Activated T-helper 2 cell treated with anti-CD3 and anti-CD28 coated beads, Interferon-gamma antibody, Interleukin-2, Interleukin-4, amounts not matched to agents 10 μg/mL and 5 μg/mL and 100 μg/mL, durations not matched to agents 14 hours and 24 hours and 36 hours (primary cell): ENCODE measurements at regions of chr5 and their contacts with region 1.

Region 1: DNA sequence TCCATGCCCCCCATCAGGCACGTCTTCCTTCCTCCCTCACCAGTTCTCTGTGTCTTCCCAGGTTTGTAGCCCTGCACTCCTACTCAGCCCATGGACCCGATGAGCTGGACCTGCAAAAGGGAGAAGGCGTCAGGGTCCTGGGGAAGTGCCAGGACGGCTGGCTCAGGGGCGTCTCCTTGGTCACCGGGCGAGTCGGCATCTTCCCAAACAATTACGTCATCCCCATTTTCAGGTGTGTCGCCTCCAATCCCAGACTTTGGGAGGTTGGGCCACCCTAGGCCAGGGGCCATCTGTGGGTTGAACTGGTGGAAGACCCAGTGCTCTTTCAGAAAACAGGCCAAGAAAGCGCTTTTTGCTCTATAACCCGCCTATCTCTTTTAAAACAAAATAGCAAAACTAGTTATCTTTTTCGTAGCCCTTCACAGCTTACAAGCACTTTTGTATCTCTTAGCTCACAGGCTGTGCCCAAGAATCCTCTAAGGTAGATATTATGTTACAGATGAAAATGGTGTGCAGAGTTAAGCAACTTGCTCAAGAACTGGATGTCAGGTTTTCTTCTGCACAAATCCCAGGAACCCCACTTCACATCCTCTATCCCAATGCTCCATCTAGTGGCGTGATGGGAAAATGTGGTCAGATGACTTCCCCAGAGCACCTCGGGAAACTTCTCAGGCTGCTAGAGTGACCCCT is 56.2 kb downstream of the PLAC8L1 start:
- DNase-seq: no peak
- H3K4me3 Mint-ChIP-seq: no peak overlapping the region
- H3K27ac Mint-ChIP-seq: no peak overlapping the region
- H3K4me1 Mint-ChIP-seq: no peaks in the 10 kb centered on the region
- H3K27me3 Mint-ChIP-seq: peaks cover 10% of the 10 kb centered on the region

Region 2: DNA sequence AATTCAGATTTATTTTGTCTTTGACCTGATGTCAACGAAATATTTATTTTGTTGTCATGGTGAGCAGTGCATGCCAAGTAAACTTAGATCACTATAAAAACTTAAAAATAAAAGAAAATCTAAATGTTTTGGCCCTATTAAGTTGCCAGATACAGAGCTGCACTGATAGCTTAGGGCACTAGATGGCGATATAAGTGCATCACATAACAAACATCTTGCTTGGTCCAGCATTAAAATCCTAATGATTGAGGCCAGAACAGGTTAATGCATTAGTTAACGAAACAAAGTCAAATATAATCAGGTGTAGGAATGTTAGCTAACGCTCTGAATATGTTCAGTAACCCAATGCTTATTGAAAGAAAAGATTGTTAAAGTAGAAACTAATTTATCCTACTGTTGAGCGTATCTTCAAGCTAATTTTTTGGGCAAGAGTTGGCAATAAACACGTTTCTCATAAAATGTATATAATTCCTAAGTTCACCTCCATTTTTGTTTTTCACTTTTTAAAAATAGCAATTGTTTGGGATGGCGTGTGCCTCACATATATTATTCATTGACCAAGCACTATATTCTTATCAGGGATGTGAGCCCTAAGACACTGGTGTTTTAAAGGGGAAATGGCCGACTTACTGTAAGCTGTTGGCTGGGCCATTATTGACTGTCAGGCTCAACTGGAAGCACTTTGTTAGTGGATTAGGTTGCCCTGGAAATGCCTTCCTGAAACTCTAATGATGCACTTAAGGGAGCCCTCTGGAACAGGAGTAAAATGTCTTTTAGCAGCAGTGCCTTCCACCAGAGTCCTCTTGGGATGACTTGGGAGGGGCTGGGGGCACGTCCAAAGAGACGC is 1845.2 kb before region 1 on chr5:
- intact Hi-C with region 1: loop called (anchors 10 kb)
- DNase-seq: no peak
- H3K4me3 Mint-ChIP-seq: no peak overlapping the region
- H3K27ac Mint-ChIP-seq: no peak overlapping the region
- H3K4me1 Mint-ChIP-seq: peaks cover 5% of the 10 kb centered on the region
- H3K27me3 Mint-ChIP-seq: peaks cover 55% of the 10 kb centered on the region

Region 3: DNA sequence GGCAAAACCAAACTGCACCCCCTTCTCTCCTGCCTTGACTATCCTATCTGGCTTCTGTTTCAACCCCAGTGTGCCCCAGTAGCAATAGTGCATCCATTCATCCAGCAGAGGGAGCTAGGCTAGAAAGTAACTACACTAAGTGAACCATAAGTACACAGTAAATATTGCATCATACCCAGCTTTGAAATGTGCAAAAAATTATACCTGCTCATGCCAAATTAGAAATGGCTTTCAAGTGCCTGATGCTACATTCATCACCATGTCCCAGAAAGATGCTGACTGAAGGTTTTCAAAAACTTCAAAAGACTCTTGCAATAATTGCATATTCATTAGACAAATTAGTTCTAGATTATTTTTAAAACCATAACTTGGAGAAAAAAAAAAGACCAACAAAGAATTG is 367.5 kb before region 1 on chr5:
- intact Hi-C with region 1: loop called (anchors 5 kb)
- DNase-seq: peak; percentile 11
- H3K4me3 Mint-ChIP-seq: no peak overlapping the region
- H3K27ac Mint-ChIP-seq: no peak overlapping the region
- H3K4me1 Mint-ChIP-seq: peaks cover 2% of the 10 kb centered on the region
- H3K27me3 Mint-ChIP-seq: no peaks in the 10 kb centered on the region

Region 4: DNA sequence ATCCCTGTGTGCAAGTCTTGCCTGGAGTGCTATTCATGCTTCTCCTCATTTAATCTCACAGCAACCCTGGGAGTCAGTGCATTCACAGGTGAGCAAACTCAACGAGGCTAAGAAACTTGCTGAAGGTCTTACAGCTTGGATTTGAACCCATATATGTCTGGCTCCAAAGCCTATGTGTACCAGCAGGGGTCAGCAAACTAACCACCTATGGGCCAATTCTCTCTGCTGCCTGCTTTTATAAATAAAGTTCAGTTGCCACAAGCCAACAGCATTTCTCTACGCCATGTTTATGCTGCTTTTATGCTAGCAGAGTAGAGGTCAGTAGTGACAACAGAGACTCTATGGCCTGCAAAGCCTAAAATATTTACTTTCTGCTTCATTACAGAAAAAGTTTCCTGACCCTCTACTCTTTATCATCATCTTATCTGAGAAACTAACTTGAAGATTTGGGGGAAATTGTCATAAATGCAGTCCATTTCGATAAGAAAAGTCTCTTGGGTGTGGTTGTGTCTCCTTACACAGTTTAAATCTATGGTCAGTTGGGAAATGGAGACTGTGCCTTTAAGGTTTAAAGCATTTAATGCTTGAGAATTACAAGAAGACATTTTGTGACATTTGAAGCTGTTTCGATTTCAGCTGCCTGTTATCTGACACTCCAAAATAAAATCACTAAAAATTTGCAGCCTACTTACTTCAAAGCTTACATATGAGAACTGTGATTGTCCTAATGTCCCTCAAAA is 351.7 kb before region 1 on chr5:
- intact Hi-C with region 1: loop called (anchors 1 kb)
- DNase-seq: no peak
- H3K4me3 Mint-ChIP-seq: no peak overlapping the region
- H3K27ac Mint-ChIP-seq: no peak overlapping the region
- H3K4me1 Mint-ChIP-seq: no peaks in the 10 kb centered on the region
- H3K27me3 Mint-ChIP-seq: no peaks in the 10 kb centered on the region

Region 5: DNA sequence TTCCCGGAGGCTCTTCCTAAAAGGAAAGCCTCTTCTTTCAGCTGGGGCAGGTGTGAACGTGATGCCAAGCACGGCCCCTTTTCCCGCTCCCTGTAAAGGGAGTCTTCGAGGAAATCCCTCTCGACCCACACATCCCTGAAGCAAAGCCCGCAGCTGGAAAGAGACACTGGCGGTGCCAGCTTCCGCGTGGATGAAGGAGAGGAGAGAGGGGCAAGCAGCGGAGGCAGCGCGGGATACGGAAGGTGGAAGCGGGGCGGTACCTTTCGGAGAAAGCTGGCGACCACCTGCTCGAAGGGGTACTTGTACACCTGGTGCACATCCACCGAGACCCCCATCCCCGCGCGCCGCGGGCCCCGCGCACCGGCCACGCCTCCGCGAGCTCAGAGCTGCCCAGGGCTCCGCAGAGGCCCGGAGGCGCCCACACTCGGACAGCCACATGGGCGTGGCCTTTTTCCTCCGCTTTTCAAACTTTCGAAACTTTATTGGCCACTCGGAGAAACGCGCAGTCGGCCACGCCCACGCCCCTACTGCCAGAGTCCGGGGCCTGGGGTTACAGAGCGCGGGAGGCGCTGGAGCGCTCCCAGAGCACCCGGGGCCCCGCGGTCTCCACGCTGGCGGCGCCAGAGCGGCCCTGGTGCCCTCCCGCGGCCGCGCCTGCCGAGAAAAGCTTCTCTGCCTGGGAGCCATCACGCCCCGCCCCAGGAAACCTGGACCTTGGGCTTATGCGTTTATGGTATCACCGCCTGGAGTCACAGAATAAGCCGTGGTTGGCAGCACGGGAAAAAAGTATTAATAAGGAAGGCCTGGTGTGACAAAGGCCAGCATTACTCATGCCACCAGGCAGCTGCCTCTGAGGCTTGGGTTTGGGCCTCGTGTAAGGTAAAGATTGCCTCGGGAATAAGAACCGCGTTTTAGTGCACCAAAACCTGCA is 214.0 kb before region 1 on chr5 and contains the start of gene PRELID2:
- intact Hi-C with region 1: loop called (anchors 10 kb)
- DNase-seq: peak; percentile 56
- H3K4me3 Mint-ChIP-seq: peak within 1 kb of the TSS; percentile 73
- H3K27ac Mint-ChIP-seq: peak within 1 kb of the TSS; percentile 28
- H3K4me1 Mint-ChIP-seq: peaks cover 24% of the 10 kb centered on the region
- H3K27me3 Mint-ChIP-seq: peaks cover 12% of the 10 kb centered on the region
- total RNA-seq, gene PRELID2: 5.6 and 7.1 TPM in 2 replicates